ENCODE measurements at regions of chr7 and their contacts with region 1.

Region 1: GRCh38 chr7:121395961-121396757 is at the start of gene FAM3C:
- DNase-seq: peak; percentile 52 to 89 (median 73)
- ATAC-seq: peak; percentile 76
- H3K4me3 ChIP-seq: peak within 1 kb of the TSS; percentile 55 to 78
- H3K4me3 Mint-ChIP-seq: peak within 1 kb of the TSS; percentile 88
- H3K27ac ChIP-seq: peak within 1 kb of the TSS; percentile 59 to 61
- H3K27ac Mint-ChIP-seq: peak within 1 kb of the TSS; percentile 88
- H3K4me1 ChIP-seq: peaks cover 16% of the 10 kb centered on the region
- H3K4me1 Mint-ChIP-seq: peaks cover 37% of the 10 kb centered on the region
- H3K27me3 ChIP-seq: no peaks in the 10 kb centered on the region
- H3K27me3 Mint-ChIP-seq: no peaks in the 10 kb centered on the region
- CTCF ChIP-seq: peak; percentile 83
- total RNA-seq, gene FAM3C: 11.7 to 11.9 TPM

Region 2: GRCh38 chr7:121385800-121386179 is 10.4 kb before region 1 on chr7:
- CTCF ChIA-PET with region 1: interaction called, 45 read pairs
- POLR2A ChIA-PET with region 1: interaction called, 19 read pairs
- intact Hi-C with region 1: loop called in 1 of 2 experiments (anchors 1 kb)
- DNase-seq: peak in 2 of 9 experiments; percentile 52 to 74
- ATAC-seq: peak; percentile 92
- H3K4me3 ChIP-seq: no peak overlapping the region
- H3K4me3 Mint-ChIP-seq: peak overlapping the region; percentile 12
- H3K27ac ChIP-seq: no peak overlapping the region
- H3K27ac Mint-ChIP-seq: peak overlapping the region; percentile 39
- H3K4me1 ChIP-seq: peaks cover 42% of the 10 kb centered on the region
- H3K4me1 Mint-ChIP-seq: peaks cover 73% of the 10 kb centered on the region
- H3K27me3 ChIP-seq: no peaks in the 10 kb centered on the region
- H3K27me3 Mint-ChIP-seq: no peaks in the 10 kb centered on the region
- CTCF ChIP-seq: no peak

Region 3: GRCh38 chr7:121429803-121430202 is 33.6 kb after region 1 on chr7:
- CTCF ChIA-PET with region 1: interaction called, 10 read pairs
- POLR2A ChIA-PET with region 1: no interaction called
- intact Hi-C with region 1: no loop called
- DNase-seq: no peak
- ATAC-seq: no peak
- H3K4me3 ChIP-seq: no peak overlapping the region
- H3K4me3 Mint-ChIP-seq: no peak overlapping the region
- H3K27ac ChIP-seq: no peak overlapping the region
- H3K27ac Mint-ChIP-seq: no peak overlapping the region
- H3K4me1 ChIP-seq: no peaks in the 10 kb centered on the region
- H3K4me1 Mint-ChIP-seq: no peaks in the 10 kb centered on the region
- H3K27me3 ChIP-seq: no peaks in the 10 kb centered on the region
- H3K27me3 Mint-ChIP-seq: peaks cover 4% of the 10 kb centered on the region
- CTCF ChIP-seq: no peak

Region 4: DNA sequence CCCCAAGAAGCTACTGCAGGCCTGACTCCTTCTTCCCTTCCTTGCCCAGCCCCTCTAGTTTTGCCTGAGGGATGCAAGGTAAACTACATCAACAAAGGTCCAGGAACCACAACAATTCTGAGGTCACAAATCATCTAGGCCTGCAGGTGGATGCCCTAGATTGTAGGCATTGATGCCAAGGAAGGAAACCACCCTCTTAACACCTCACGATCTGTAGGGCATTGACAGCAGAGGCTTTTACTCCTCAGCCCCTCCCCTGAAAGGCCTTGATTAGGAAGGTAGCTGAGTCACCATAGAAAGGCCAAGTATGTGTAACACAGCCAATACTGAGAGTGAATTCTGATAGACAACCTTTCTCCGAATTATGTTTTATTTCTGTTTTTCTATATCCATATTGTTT is 46.7 kb after region 1 on chr7:
- CTCF ChIA-PET with region 1: interaction called, 10 read pairs
- POLR2A ChIA-PET with region 1: interaction called, 15 read pairs
- intact Hi-C with region 1: loop called (anchors 1 to 2 kb)
- DNase-seq: peak in 4 of 9 experiments; percentile 14 to 76 (median 54)
- ATAC-seq: peak; percentile 74
- H3K4me3 ChIP-seq: no peak overlapping the region
- H3K4me3 Mint-ChIP-seq: no peak overlapping the region
- H3K27ac ChIP-seq: peak overlapping the region in 1 of 2 experiments; percentile 83
- H3K27ac Mint-ChIP-seq: peak overlapping the region; percentile 52
- H3K4me1 ChIP-seq: peaks cover 12% of the 10 kb centered on the region
- H3K4me1 Mint-ChIP-seq: peaks cover 33% of the 10 kb centered on the region
- H3K27me3 ChIP-seq: no peaks in the 10 kb centered on the region
- H3K27me3 Mint-ChIP-seq: no peaks in the 10 kb centered on the region
- CTCF ChIP-seq: no peak